Gastrocnemius medialis (tissue), 4 donors: ENCODE measurements at regions of chr3 and their contacts with region 1.

Region 1: DNA sequence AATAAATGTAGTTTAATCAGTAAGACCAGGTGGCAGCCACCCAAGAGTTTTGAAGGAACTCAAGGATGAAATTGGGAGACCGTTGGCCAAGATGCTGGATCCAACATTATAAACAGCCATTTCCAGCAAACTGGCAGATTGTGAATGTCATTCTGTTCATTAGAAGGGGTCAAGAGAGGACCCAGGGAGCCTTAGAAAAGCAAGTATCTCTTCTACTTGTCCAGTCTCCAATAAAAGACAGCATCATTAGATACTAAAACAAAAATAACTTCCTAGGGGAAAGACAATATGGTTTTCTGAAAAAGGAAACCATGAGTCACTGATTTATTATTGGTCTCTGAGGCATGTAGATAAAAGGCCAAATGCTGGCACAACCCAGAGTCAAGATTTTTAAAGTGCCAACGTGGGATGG is 67.9 kb downstream of the GADL1 start:
- DNase-seq: peak in 1 of 2 donors; percentile 42
- ATAC-seq: peak; percentile 100
- H3K4me3 ChIP-seq: no peak overlapping the region
- H3K27ac ChIP-seq: peak overlapping the region; percentile 67 to 82 (median 74)
- H3K4me1 ChIP-seq: peaks cover 52 to 55% of the 10 kb centered on the region in 2 donors
- H3K27me3 ChIP-seq: no peaks in the 10 kb centered on the region
- CTCF ChIP-seq: no peak
- POLR2A ChIP-seq: no peak

Region 2: DNA sequence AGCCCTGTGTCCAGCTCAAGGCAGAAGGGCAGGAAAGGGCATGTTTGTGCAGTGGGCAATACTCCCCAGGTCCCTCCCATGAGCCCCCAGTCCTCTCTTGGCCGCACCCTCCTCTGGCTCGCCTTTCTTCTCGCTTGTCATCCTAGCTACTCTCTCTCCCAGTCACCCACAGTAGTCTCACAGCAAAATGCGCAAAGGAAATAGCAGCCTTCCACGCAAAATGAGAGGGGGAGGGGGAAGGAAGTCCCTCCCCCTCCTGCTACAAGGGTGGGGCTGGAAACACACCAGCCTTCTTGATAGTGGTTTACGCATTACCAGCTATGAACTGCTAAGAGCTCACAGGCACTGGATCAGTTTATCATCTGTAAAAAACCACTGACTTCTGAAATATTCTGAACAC is 15.9 kb before region 1 on chr3:
- in situ Hi-C with region 1: no loop called
- intact Hi-C with region 1: loop called (anchors 1 kb)
- DNase-seq: peak in 1 of 2 donors; percentile 36
- ATAC-seq: peak; percentile 40 to 83
- H3K4me3 ChIP-seq: peak overlapping the region; percentile 15 to 41 (median 36)
- H3K27ac ChIP-seq: peak overlapping the region; percentile 78 to 84 (median 81)
- H3K4me1 ChIP-seq: peaks cover 19 to 25% of the 10 kb centered on the region in 2 donors
- H3K27me3 ChIP-seq: no peaks in the 10 kb centered on the region
- CTCF ChIP-seq: no peak
- POLR2A ChIP-seq: no peak

Region 3: GRCh38 chr3:30848087-30848779 is 21.7 kb after region 1 on chr3:
- in situ Hi-C with region 1: no loop called
- intact Hi-C with region 1: loop called (anchors 2 kb)
- DNase-seq: peak; percentile 22 to 56
- ATAC-seq: peak; percentile 90 to 98
- H3K4me3 ChIP-seq: peak overlapping the region in 1 of 4 donors; percentile 3
- H3K27ac ChIP-seq: peak overlapping the region; percentile 68 to 86 (median 76)
- H3K4me1 ChIP-seq: peaks cover 32 to 34% of the 10 kb centered on the region in 2 donors
- H3K27me3 ChIP-seq: no peaks in the 10 kb centered on the region
- CTCF ChIP-seq: no peak
- POLR2A ChIP-seq: no peak